Vagina (tissue), 2 donors: ENCODE measurements at regions of chr19 and their contacts with region 1.

Region 1: DNA sequence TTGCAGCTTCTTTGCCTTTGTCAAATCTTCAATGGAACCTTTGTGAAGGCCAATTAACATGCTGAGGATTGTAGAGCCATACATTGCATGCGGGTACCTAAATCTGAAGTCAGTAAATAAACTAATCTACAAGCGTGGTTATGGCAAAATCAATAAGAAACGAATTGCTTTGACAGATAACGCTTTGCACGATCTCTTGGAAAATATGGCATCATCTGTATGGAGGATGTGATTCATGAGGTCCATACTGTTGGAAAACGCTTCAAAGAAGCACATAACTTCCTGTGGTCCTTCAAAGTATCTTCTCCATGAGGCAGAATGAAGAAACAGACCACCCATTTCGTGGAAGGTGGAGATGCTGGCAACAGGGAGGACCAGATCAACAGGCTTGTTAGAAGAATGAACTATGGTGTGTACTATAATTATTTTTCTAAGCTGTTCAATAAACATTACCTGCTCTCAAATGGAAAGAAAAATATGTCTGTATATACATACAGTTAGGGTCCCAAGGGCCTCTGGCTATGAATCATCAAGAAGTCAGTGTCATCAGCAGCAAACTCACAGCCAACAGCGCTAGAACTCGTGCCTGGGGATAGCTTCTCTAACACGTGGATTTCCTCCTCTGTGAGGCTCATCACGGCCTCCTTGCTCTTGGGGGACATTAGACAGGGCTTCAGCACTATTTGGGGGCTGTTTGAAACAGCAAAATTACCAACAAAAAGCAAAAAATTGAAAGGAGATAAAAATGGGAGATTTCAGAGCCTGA is 2.9 kb upstream of the CD70 start:
- DNase-seq: no peak
- H3K4me3 ChIP-seq: no peak overlapping the region
- H3K27ac ChIP-seq: no peak overlapping the region
- H3K4me1 ChIP-seq: peaks cover 14% of the 10 kb centered on the region
- H3K27me3 ChIP-seq: no peaks in the 10 kb centered on the region
- CTCF ChIP-seq: no peak
- POLR2A ChIP-seq: no peak

Region 2: GRCh38 chr19:6613711-6614110 is 19.9 kb after region 1 on chr19:
- intact Hi-C with region 1: loop called (anchors 2 kb)
- DNase-seq: no peak
- H3K4me3 ChIP-seq: no peak overlapping the region
- H3K27ac ChIP-seq: no peak overlapping the region
- H3K4me1 ChIP-seq: no peaks in the 10 kb centered on the region
- H3K27me3 ChIP-seq: no peaks in the 10 kb centered on the region
- CTCF ChIP-seq: no peak
- POLR2A ChIP-seq: no peak

Region 3: DNA sequence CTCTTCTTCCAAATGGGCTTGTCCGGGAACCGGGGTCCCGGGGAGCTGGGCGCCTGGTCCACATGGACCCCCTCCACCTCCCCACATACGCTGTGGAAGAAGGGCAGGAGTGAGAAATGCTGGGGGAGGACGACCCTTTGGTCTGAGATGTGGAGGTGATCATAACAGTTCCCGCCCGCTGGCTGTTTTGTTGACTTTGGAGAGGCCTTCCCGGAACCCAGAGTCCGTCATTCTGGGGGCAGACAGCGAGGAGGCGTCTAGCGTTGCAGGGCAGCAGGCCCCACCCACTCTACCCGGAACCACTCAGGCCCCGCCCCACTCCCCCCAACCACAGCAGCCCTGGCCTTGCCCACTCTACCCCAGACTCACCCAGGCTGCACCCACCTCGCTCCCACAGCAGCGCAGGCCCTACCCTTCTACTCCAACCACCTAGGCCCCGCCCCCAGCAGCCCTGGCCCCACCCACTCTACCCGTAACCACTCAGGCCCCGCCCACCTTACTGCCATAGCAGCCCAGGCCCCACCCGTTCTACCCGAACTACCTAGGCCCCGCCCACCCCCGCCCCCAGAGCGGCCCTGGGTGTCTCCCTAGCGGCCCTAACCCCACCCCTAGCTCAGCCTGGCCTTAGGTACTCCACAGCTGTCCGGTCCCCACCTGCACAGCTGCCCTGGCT is 136.5 kb after region 1 on chr19:
- intact Hi-C with region 1: no loop called
- DNase-seq: no peak
- H3K4me3 ChIP-seq: no peak overlapping the region
- H3K27ac ChIP-seq: no peak overlapping the region
- H3K4me1 ChIP-seq: peaks cover under 1% of the 10 kb centered on the region
- H3K27me3 ChIP-seq: no peaks in the 10 kb centered on the region
- CTCF ChIP-seq: no peak
- POLR2A ChIP-seq: no peak

Region 4: DNA sequence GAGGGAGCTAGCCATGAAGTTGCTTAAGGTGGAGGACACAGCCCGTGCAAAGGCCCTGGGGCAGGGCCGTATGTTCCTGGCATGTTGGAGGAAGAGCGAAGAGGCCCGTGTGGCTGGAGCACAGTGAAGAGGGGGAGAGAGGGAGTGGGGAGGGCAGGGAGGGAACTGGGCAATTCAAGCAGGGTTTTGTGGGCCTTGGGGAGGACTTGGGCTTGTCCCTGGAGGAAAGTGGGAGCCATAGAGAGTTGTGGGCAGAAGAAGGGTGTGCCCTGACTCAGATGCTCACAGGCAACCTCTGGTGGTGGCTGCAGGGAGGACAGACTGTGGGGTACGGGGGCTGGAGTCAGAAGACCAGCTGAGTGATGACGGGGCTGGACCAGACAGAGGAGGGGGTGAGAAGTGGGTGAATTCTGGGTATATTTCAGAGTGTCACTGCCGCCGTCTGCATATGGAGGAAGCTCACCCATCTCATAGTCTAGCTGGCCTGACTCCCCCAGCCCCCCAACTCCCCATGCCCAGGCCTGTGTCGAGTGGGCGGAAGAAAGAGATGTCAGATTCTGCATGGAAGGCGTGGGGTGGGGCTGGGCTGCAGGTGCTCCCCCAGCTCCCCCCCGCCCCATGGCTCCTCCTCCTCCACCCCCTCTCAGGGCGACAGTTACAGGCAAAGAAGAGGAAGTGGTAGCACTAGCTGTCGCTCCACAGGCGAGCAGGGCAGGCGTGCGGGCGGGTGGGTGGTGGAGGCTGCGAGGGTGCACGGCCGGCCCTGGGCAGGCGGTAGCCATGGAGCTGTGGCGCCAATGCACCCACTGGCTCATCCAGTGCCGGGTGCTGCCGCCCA is 178.4 kb after region 1 on chr19 and contains the start of gene VAV1:
- intact Hi-C with region 1: no loop called
- DNase-seq: no peak
- H3K4me3 ChIP-seq: peak within 1 kb of the TSS; percentile 25 to 43
- H3K27ac ChIP-seq: no peak within 1 kb of the TSS
- H3K4me1 ChIP-seq: peaks cover 8% of the 10 kb centered on the region
- H3K27me3 ChIP-seq: peaks cover 3% of the 10 kb centered on the region
- CTCF ChIP-seq: no peak
- POLR2A ChIP-seq: peak in 1 of 2 donors; percentile 22
- total RNA-seq, gene VAV1: 5.9 TPM